Heart right ventricle (tissue), 16 donors: ENCODE measurements at regions of chr2 and their contacts with region 1.

Region 1: GRCh38 chr2:241315093-241315878 is at the start of gene HDLBP:
- DNase-seq: peak; percentile 100
- ATAC-seq: peak; percentile 90 to 97 (median 94)
- H3K4me3 ChIP-seq: peak within 1 kb of the TSS; percentile 68 to 93 (median 76)
- H3K27ac ChIP-seq: peak within 1 kb of the TSS; percentile 89 to 99 (median 96)
- H3K4me1 ChIP-seq: peaks cover 8 to 80% (median 61%) of the 10 kb centered on the region in 9 donors
- H3K27me3 ChIP-seq: no peaks in the 10 kb centered on the region
- CTCF ChIP-seq: peak in 6 of 9 donors; percentile 40 to 67 (median 52)
- total RNA-seq, gene HDLBP: 312 to 419 (median 357) TPM

Region 2: GRCh38 chr2:241199897-241200821 is 115.1 kb before region 1 on chr2:
- intact Hi-C with region 1: no loop called
- DNase-seq: no peak
- ATAC-seq: no peak
- H3K4me3 ChIP-seq: no peak overlapping the region
- H3K27ac ChIP-seq: no peak overlapping the region
- H3K4me1 ChIP-seq: no peaks in the 10 kb centered on the region
- H3K27me3 ChIP-seq: no peaks in the 10 kb centered on the region
- CTCF ChIP-seq: no peak

Region 3: GRCh38 chr2:241271641-241272297 is 43.5 kb before region 1 on chr2:
- intact Hi-C with region 1: loop called in 7 of 10 experiments (anchors 2 to 5 kb)
- DNase-seq: peak; percentile 79 to 85
- ATAC-seq: peak; percentile 83 to 93 (median 90)
- H3K4me3 ChIP-seq: peak overlapping the region; percentile 81 to 96 (median 91)
- H3K27ac ChIP-seq: peak overlapping the region; percentile 63 to 96 (median 93)
- H3K4me1 ChIP-seq: peaks cover 6 to 48% (median 39%) of the 10 kb centered on the region in 9 donors
- H3K27me3 ChIP-seq: no peaks in the 10 kb centered on the region
- CTCF ChIP-seq: no peak

Region 4: DNA sequence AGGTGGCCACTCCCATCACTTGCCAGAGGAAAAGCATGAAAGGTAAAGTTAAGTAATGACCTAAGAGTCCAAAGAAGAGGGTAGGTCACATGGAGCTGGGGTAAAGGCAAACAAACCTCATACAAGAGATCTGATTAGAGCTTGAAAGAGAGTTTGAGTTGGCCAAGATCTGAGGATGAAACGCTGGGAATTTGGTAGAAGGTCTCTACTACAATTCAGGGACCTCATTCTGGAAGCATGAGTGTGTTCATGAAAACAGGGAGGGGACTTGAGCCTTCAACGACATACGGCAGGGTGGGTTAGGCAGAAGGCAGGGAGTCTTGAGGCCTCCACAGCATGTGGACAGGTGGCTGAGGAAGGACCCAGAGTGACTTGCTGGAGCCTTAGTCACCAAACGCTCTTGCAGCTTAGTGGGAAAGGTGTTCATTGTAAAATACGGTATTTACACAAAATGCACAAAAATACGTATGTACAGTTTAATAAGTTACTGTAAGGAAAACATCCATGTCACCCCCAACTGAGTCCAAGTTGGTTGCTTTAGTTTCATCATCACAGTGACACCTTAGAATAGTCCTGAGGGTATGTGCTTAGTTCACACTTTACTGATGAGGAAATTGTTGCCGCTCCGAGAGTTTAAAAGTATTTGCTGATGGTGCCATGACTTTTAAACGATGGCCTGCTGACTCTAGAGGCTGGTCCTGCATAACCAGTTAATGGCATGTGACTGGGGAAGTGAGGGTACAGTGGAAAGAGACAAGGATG is 35.8 kb after region 1 on chr2:
- intact Hi-C with region 1: loop called in 5 of 10 experiments (anchors 2 to 5 kb)
- DNase-seq: no peak
- ATAC-seq: no peak
- H3K4me3 ChIP-seq: no peak overlapping the region
- H3K27ac ChIP-seq: no peak overlapping the region
- H3K4me1 ChIP-seq: peaks cover 0 to 9% (median 3%) of the 10 kb centered on the region in 9 donors
- H3K27me3 ChIP-seq: no peaks in the 10 kb centered on the region
- CTCF ChIP-seq: no peak